A673 (cell line): ENCODE measurements at regions of chr1 and their contacts with region 1.

Region 1: GRCh38 chr1:203273206-203273868 is 32.0 kb upstream of the BTG2 start:
- DNase-seq: peak; percentile 87
- H3K4me3 ChIP-seq: no peak overlapping the region
- H3K27ac ChIP-seq: no peak overlapping the region
- H3K4me1 ChIP-seq: peaks cover 31% of the 10 kb centered on the region
- H3K27me3 ChIP-seq: no peaks in the 10 kb centered on the region
- CTCF ChIP-seq: peak; percentile 99

Region 2: GRCh38 chr1:203486618-203487370 is 213.5 kb after region 1 on chr1:
- CTCF ChIA-PET with region 1: interaction called, 8 read pairs
- POLR2A ChIA-PET with region 1: no interaction called
- intact Hi-C with region 1: loop called (anchors 1 kb)
- DNase-seq: no peak
- H3K4me3 ChIP-seq: peak overlapping the region; percentile 48
- H3K27ac ChIP-seq: peak overlapping the region; percentile 53
- H3K4me1 ChIP-seq: peaks cover 4% of the 10 kb centered on the region
- H3K27me3 ChIP-seq: no peaks in the 10 kb centered on the region
- CTCF ChIP-seq: no peak